ENCODE measurements at regions of chr20 and their contacts with region 1.

Region 1: DNA sequence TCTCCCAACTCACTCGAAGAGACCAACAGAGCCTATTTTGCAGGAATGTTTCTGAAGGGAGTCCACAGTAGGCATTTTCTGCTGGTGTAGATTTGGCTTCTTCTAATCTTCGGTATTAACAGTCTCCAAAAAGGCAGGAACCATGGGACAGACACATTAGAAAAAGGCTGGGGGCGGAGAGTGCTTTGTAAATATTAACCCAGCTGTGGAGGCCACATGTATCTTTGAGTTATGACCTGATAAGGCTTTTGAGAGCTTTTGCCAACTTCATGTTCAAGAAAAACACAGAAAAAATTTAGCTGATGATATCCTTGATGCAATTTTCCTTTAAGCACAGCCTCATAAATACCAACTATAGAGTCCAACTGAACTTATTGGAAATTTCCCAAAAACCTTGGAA is 119.4 kb upstream of the TSHZ2 start:
- DNase-seq: no peak
- ATAC-seq: no peak
- H3K4me3 ChIP-seq: no peak overlapping the region
- H3K4me3 Mint-ChIP-seq: no peak overlapping the region
- H3K27ac ChIP-seq: no peak overlapping the region
- H3K27ac Mint-ChIP-seq: no peak overlapping the region
- H3K4me1 ChIP-seq: no peaks in the 10 kb centered on the region
- H3K4me1 Mint-ChIP-seq: no peaks in the 10 kb centered on the region
- H3K27me3 ChIP-seq: no peaks in the 10 kb centered on the region
- H3K27me3 Mint-ChIP-seq: peaks cover 9% of the 10 kb centered on the region
- CTCF ChIP-seq: no peak

Region 2: DNA sequence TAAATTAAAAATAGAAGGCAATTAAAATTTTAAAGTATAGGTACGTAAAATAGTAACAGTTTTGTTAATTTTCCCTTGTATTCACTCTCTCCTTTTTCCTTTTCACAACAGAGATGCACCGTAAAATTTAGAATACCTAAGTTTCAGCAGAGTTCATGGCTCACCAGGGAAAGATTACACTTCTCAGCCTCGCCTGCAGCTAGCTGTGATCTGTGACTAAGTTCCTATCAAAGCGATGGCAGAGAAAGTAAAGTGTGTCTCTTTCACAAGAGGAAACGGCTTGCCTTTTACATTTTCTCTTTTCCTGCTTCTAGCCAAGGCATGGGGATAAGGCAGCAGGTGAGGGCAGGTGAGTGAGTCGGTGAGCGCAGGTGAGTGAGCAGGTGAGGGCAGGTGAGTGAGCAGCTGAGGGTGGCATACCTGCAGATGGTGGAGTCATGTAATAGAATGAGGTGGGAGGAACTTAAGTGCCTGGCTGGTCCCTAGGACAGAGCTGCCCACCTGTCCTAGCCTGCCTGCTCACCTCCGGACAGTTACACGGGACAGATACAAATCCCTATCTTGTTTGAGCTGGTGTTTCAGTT is 692.0 kb before region 1 on chr20:
- CTCF ChIA-PET with region 1: no interaction called
- POLR2A ChIA-PET with region 1: no interaction called
- intact Hi-C with region 1: loop called in 1 of 2 experiments (anchors 5 kb)
- DNase-seq: no peak
- ATAC-seq: no peak
- H3K4me3 ChIP-seq: no peak overlapping the region
- H3K4me3 Mint-ChIP-seq: no peak overlapping the region
- H3K27ac ChIP-seq: no peak overlapping the region
- H3K27ac Mint-ChIP-seq: no peak overlapping the region
- H3K4me1 ChIP-seq: no peaks in the 10 kb centered on the region
- H3K4me1 Mint-ChIP-seq: no peaks in the 10 kb centered on the region
- H3K27me3 ChIP-seq: no peaks in the 10 kb centered on the region
- H3K27me3 Mint-ChIP-seq: no peaks in the 10 kb centered on the region
- CTCF ChIP-seq: no peak

Measured in CD8-positive, alpha-beta T cell (primary cell).